IMR-90 (cell line): ENCODE measurements at regions of chr9 and their contacts with region 1.

Region 1: GRCh38 chr9:19925817-19926503 is 137.1 kb upstream of the SLC24A2 start:
- DNase-seq: peak; percentile 68
- ATAC-seq: peak; percentile 98
- H3K4me3 ChIP-seq: peak overlapping the region; percentile 56
- H3K27ac ChIP-seq: no peak overlapping the region
- H3K4me1 ChIP-seq: no peaks in the 10 kb centered on the region
- H3K27me3 ChIP-seq: peaks cover 15% of the 10 kb centered on the region
- CTCF ChIP-seq: peak; percentile 96
- POLR2A ChIP-seq: 0 out of 2 replicates have a peak, but pooled peaks have one; percentile 29
- RAD21 ChIP-seq: peak; percentile 98

Region 2: DNA sequence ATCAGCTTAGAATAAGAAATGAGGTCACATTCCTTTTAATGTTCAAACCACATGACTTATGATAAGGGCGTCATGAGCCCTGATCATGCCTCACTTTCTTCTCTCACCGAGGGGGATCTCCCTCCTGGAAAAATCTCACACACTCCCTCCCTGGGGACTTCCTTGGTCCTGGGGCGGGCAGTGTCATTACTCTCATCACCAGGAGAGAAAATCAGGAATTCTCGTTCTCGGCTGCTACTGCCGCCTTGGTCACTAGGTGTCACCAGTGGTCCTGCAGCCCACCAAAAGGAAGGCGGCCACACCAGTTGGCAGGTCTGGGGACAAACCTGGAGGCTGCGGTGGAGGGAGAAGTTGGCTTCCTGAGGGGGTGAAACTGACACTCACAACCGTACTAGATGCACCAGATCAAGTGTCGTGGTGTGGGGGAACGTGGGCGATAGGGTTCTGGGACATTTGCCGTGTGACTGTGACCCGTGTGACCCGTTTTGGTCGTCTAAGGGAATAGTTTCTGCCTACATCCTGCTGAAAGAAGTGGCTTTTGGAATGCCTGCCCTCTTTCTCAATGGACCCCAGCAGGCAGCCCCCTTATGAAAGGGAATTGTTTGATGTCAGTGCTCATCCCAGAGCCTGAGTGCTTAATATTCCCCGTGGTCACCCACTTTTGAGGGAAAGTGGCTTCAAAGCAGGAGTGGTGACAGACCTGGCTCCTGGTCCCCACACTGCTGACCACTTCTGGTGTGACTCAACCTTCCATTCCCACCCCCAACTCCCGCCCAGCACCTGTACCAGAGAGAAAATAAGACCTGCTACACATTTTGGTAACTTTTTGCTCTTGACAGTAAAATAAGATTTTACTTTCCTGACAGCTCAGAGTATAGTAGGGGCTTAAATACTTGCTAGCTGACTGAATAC is 454.0 kb before region 1 on chr9:
- CTCF ChIA-PET with region 1: interaction called, 4 read pairs
- POLR2A ChIA-PET with region 1: no interaction called
- dilution Hi-C with region 1: no loop called
- in situ Hi-C with region 1: loop called (anchors 25 kb)
- intact Hi-C with region 1: loop called (anchors 1 kb)
- DNase-seq: peak; percentile 33
- ATAC-seq: peak; percentile 94
- H3K4me3 ChIP-seq: no peak overlapping the region
- H3K27ac ChIP-seq: no peak overlapping the region
- H3K4me1 ChIP-seq: no peaks in the 10 kb centered on the region
- H3K27me3 ChIP-seq: peaks cover 28% of the 10 kb centered on the region
- CTCF ChIP-seq: peak; percentile 62
- POLR2A ChIP-seq: no peak
- RAD21 ChIP-seq: peak; percentile 54

Region 3: GRCh38 chr9:20356403-20357035 is 430.6 kb after region 1 on chr9:
- CTCF ChIA-PET with region 1: no interaction called
- POLR2A ChIA-PET with region 1: no interaction called
- dilution Hi-C with region 1: no loop called
- in situ Hi-C with region 1: loop called (anchors 10 kb)
- intact Hi-C with region 1: loop called (anchors 1 kb)
- DNase-seq: peak; percentile 86
- ATAC-seq: peak; percentile 70
- H3K4me3 ChIP-seq: no peak overlapping the region
- H3K27ac ChIP-seq: peak overlapping the region; percentile 9; the same call in 1 of the 2 replicates
- H3K4me1 ChIP-seq: peaks cover 21% of the 10 kb centered on the region
- H3K27me3 ChIP-seq: no peaks in the 10 kb centered on the region
- CTCF ChIP-seq: peak; percentile 83
- POLR2A ChIP-seq: no peak
- RAD21 ChIP-seq: peak; percentile 89

Region 4: GRCh38 chr9:20397348-20397747 is 471.4 kb after region 1 on chr9:
- CTCF ChIA-PET with region 1: no interaction called
- POLR2A ChIA-PET with region 1: no interaction called
- dilution Hi-C with region 1: no loop called
- in situ Hi-C with region 1: no loop called
- intact Hi-C with region 1: no loop called
- DNase-seq: no peak
- ATAC-seq: no peak
- H3K4me3 ChIP-seq: no peak overlapping the region
- H3K27ac ChIP-seq: no peak overlapping the region
- H3K4me1 ChIP-seq: no peaks in the 10 kb centered on the region
- H3K27me3 ChIP-seq: no peaks in the 10 kb centered on the region
- CTCF ChIP-seq: no peak
- POLR2A ChIP-seq: no peak
- RAD21 ChIP-seq: no peak

Region 5: GRCh38 chr9:20884985-20885593 is 959.1 kb after region 1 on chr9:
- CTCF ChIA-PET with region 1: no interaction called
- POLR2A ChIA-PET with region 1: no interaction called
- dilution Hi-C with region 1: no loop called
- in situ Hi-C with region 1: no loop called
- intact Hi-C with region 1: loop called (anchors 5 kb)
- DNase-seq: peak; percentile 57
- ATAC-seq: 0 out of 2 replicates have a peak, but pooled peaks have one; percentile 27
- H3K4me3 ChIP-seq: no peak overlapping the region
- H3K27ac ChIP-seq: no peak overlapping the region
- H3K4me1 ChIP-seq: no peaks in the 10 kb centered on the region
- H3K27me3 ChIP-seq: no peaks in the 10 kb centered on the region
- CTCF ChIP-seq: peak; percentile 50
- POLR2A ChIP-seq: no peak
- RAD21 ChIP-seq: peak; percentile 47

Region 6: DNA sequence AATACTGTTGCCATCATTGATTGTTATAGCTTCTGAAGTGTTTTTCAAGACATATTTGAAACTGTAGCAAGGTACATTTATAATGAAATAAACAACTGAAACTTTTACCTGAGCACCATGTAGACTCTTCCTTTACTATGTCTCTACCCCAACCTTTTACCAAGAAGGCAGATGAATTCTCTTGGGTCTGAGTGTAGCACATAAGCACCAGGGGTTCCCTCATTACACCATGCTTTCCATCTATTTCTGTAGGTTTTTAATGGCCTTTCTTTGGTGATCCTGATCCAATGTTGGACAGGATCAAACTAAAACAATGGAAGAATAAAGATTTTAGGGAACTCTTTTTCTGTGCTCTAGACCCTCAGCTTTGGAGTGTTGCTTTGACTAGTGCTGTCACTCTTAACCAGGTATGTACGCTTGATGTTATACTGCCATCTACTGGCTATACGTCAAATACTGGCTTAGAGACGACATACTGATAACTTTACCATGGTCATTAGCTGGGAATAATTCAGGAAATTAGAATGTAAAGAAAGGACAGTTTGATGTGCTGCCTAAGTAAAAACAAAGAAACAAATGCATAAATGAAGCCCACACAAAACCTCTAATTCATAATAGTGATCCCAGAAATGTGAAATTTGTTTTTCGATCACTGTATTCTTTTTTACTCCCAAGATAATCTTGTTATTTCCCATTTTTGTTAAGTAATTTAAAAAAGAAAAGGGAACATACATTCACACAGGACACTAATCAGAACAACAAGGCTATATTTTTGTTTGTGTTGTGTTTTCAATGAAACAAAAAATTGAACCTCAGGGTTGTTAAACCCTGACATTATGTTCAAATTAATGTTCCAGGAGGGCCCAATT is 1185.0 kb after region 1 on chr9:
- CTCF ChIA-PET with region 1: interaction called, 3 read pairs
- POLR2A ChIA-PET with region 1: no interaction called
- dilution Hi-C with region 1: no loop called
- in situ Hi-C with region 1: loop called (anchors 10 kb)
- intact Hi-C with region 1: loop called (anchors 1 kb)
- DNase-seq: peak; percentile 82
- ATAC-seq: peak; percentile 93
- H3K4me3 ChIP-seq: no peak overlapping the region
- H3K27ac ChIP-seq: no peak overlapping the region
- H3K4me1 ChIP-seq: no peaks in the 10 kb centered on the region
- H3K27me3 ChIP-seq: no peaks in the 10 kb centered on the region
- CTCF ChIP-seq: peak; percentile 90
- POLR2A ChIP-seq: no peak
- RAD21 ChIP-seq: peak; percentile 97